ENCODE measurements at regions of chr2 and their contacts with region 1.

Region 1: GRCh38 chr2:64644177-64645004 is 9.3 kb downstream of the SERTAD2 start:
- DNase-seq: peak; percentile 82
- ATAC-seq: peak; percentile 75
- H3K4me3 Mint-ChIP-seq: peak overlapping the region; percentile 82
- H3K27ac Mint-ChIP-seq: peak overlapping the region; percentile 90
- H3K4me1 Mint-ChIP-seq: peaks cover 89% of the 10 kb centered on the region
- H3K27me3 Mint-ChIP-seq: no peaks in the 10 kb centered on the region
- CTCF ChIP-seq: no peak

Region 2: DNA sequence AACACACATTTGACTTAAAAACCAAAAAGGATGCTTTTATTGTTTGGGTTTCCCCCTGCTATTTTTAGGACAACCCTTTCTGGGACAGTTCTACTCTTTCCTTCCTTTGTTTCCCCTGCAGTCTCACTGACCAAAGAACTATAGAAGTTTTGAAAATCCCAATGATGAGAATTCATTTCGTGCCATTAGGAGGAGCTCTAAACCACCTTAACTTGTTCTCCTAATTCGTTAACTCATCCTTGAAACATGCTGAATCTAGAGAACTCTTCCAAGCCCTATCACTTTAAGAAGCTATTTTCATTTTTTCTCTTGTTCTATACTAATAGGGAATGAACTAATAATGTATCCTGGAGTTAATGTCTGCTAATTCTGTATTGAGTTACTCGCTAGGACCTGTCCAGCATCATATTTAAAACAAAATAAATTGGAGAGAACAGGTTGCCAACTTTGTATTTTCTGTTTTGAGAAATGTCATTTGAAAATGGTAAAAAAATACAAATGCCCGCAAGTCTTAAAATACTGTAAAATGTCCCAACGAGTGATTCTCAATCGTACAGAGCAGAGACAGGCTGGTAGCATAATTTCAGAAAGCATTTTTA is 57.4 kb before region 1 on chr2:
- CTCF ChIA-PET with region 1: interaction called, 12 read pairs
- POLR2A ChIA-PET with region 1: no interaction called
- intact Hi-C with region 1: no loop called
- DNase-seq: no peak
- ATAC-seq: peak; percentile 65
- H3K4me3 Mint-ChIP-seq: no peak overlapping the region
- H3K27ac Mint-ChIP-seq: no peak overlapping the region
- H3K4me1 Mint-ChIP-seq: peaks cover 15% of the 10 kb centered on the region
- H3K27me3 Mint-ChIP-seq: no peaks in the 10 kb centered on the region
- CTCF ChIP-seq: peak; percentile 69

Region 3: GRCh38 chr2:64730551-64731262 is 86.3 kb after region 1 on chr2:
- CTCF ChIA-PET with region 1: interaction called, 15 read pairs
- POLR2A ChIA-PET with region 1: interaction called, 4 read pairs
- intact Hi-C with region 1: no loop called
- DNase-seq: peak; percentile 58
- ATAC-seq: peak; percentile 51
- H3K4me3 Mint-ChIP-seq: peak overlapping the region; percentile 83
- H3K27ac Mint-ChIP-seq: peak overlapping the region; percentile 96
- H3K4me1 Mint-ChIP-seq: peaks cover 67% of the 10 kb centered on the region
- H3K27me3 Mint-ChIP-seq: no peaks in the 10 kb centered on the region
- CTCF ChIP-seq: no peak

Region 4: DNA sequence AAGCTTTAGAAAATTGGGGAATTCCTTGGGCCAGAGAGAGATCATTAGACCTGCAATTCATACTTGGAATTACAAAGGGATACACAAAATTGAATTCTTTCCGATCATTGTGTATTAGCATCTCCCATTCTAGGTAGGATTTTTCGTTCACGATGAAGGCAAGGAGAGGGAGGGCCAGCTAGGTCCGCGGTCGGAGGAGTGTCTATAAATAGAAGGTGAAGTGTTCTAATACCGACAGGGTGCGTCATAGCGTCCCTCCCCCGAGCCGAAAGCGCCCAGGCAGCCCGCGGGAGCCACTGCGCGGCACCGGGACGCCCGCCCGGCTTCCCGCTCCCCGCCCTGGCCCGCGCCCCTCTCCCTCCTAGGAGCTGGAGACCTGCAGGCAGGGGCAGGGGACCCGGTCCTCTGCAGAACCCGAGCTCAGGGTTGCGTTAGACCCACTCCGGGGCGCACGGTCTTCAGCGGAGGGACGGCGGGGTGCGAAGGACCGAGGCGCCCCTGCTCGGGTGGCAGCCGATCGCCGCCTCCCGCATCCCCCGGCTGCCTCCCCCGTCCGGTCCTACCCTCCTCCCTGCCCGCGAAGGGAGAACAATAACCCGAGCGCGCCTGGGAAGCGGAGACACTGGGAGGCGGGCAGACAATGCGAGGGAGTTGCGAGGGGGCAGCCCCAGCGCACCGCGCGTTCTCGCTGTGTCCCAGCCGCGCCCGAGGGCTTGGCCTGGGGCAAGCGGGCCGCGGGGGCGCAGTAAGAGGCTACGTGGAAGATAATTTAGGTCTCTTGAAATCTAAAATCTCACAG is 123.5 kb after region 1 on chr2:
- CTCF ChIA-PET with region 1: interaction called, 10 read pairs
- POLR2A ChIA-PET with region 1: no interaction called
- intact Hi-C with region 1: loop called (anchors 5 kb)
- DNase-seq: peak; percentile 90
- ATAC-seq: peak; percentile 84
- H3K4me3 Mint-ChIP-seq: peak overlapping the region; percentile 81
- H3K27ac Mint-ChIP-seq: peak overlapping the region; percentile 94
- H3K4me1 Mint-ChIP-seq: peaks cover 33% of the 10 kb centered on the region
- H3K27me3 Mint-ChIP-seq: no peaks in the 10 kb centered on the region
- CTCF ChIP-seq: no peak

Region 5: DNA sequence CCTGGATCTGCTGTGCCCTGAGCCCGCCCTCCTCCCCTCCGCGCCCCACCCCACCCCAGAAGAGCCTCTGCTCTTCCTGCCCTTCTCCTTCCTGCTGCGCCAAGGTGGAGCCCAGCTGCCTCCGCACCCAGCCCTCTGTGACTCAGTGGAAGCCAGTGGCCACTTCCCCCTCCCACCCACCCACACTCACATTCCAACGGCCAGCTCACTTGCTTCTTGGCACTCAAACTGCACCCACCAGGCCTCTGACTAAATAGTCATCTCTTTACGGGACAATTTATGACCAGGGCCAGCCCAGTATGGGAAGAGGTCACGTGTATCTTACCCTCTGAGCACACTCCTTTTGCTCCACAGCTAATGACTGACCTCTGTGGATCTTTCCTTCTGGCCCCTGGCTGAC is 194.4 kb after region 1 on chr2:
- CTCF ChIA-PET with region 1: interaction called, 33 read pairs
- POLR2A ChIA-PET with region 1: no interaction called
- intact Hi-C with region 1: loop called (anchors 5 kb)
- DNase-seq: no peak
- ATAC-seq: no peak
- H3K4me3 Mint-ChIP-seq: no peak overlapping the region
- H3K27ac Mint-ChIP-seq: no peak overlapping the region
- H3K4me1 Mint-ChIP-seq: peaks cover 6% of the 10 kb centered on the region
- H3K27me3 Mint-ChIP-seq: no peaks in the 10 kb centered on the region
- CTCF ChIP-seq: no peak

Measured in activated CD8-positive, alpha-beta T cell treated with anti-CD3 and anti-CD28 coated beads for 36 hours (primary cell).